ENCODE measurements at regions of chr9 and their contacts with region 1.

Region 1: DNA sequence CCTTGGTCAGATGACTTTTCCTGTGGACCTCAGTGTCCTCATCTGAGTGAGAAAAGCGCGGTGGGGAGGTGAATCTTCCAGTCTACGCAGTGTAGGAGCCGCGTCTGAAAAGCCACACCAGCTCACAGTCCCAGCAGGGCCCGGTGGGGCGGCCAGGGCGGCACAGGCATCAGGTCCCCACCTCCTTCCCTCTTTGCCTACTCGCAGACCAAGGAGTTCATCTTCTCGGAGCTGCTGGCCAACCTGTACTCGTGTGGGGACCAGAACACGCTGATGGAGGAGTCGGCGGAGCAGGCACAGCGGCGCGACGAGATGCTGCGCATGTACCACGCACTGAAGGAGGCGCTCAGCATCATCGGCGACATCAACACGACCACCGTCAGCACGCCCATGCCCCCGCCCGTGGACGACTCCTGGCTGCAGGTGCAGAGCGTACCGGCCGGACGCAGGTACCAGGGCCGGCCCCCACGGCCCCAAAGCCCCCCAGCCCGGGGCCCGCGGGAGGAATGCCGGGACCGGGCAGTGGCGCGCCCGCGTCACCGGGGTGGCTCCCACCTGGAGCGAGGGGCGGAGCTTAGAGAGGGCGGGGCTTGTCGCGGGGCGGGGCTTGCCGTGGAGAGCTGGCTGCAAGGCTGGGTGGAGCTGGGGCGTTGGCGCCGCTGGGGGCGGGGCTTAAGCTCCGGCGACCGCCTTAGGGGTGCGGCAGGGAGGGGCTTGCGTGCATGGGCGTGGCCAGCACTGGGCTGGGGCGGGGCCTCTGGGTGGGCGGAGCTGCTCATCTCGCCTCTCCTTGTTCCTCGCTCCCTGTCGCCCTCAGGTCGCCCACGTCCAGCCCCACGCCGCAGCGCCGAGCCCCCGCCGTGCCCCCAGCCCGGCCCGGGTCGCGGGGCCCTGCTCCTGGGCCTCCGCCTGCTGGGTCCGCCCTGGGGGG is 25.6 kb downstream of the GOLGA2 start:
- DNase-seq: peak; percentile 98
- ATAC-seq: peak; percentile 91
- H3K4me3 Mint-ChIP-seq: peak overlapping the region; percentile 85
- H3K27ac Mint-ChIP-seq: peak overlapping the region; percentile 83
- H3K4me1 Mint-ChIP-seq: peaks cover 41% of the 10 kb centered on the region
- H3K27me3 Mint-ChIP-seq: peaks cover 9% of the 10 kb centered on the region
- CTCF ChIP-seq: no peak

Region 2: DNA sequence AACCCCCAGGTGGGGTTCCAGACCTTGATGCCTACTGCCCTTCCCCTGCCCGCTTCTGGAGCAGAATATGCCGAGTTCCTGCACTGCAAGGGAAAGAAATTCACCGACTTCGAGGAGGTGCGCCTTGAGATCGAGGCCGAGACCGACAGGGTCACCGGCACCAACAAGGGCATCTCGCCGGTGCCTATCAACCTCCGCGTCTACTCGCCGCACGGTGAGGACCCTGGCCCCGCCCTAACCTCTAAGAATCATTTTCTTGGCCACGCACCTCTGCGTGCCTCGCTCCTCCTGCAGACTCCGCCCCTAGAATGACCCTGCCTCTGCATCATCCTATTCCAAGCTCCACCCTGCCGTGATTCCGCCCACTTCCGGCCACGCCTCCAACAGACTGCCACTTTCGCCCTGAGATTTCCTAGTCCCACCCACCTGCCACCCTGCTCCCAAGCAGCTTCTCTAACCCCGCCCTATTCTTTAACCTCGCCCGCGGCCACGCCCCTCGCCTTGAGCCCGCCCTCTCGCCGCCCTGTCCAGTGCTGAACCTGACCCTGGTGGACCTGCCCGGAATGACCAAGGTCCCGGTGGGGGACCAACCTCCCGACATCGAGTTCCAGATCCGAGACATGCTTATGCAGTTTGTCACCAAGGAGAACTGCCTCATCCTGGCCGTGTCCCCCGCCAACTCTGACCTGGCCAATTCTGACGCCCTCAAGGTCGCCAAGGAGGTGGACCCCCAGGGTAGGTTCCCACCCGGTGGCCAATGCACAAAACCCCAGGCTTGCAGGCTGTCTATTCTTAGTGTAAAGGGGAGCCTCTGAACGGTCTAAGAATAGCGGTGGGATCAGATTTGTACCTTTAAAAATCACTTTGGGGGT is 31.4 kb before region 1 on chr9:
- CTCF ChIA-PET with region 1: interaction called, 17 read pairs
- POLR2A ChIA-PET with region 1: interaction called, 4 read pairs
- DNase-seq: peak; percentile 99
- ATAC-seq: peak; percentile 97
- H3K4me3 Mint-ChIP-seq: peak overlapping the region; percentile 75
- H3K27ac Mint-ChIP-seq: peak overlapping the region; percentile 97
- H3K4me1 Mint-ChIP-seq: peaks cover 12% of the 10 kb centered on the region
- H3K27me3 Mint-ChIP-seq: peaks cover 4% of the 10 kb centered on the region; the same call in 1 of the 2 replicates
- CTCF ChIP-seq: no peak

Region 3: DNA sequence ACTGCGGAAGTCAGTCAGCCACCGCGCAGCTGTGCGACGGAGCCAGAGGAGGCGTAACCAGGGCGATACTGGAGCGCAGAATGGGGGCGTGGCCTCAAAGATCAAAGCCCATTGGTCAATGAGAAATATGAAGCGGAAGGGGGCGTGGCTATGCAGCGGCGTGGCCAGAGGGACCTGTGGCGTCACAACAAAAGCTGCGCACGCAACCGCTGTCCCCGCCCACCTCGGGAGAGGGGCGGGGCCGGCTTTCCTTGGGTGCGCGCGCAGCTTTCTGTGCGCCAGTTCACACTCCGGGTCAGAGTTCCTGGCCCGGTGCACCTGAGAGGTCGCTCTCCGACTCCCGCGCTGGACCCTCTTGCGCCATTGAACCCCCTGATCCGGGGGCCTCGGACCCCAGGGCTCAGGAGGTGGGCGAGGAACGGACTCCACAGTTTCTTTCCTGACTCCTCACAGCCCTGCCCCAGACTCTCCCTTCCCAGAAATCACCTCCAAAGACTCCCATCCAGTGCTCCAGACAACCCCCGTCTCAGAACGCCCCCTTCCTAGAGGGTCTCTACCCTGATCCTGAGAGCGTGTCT is 25.9 kb after region 1 on chr9 and contains the starts of genes GOLGA2 and SWI5:
- CTCF ChIA-PET with region 1: interaction called, 25 read pairs
- POLR2A ChIA-PET with region 1: interaction called, 9 read pairs
- DNase-seq: peak; percentile 100
- ATAC-seq: peak; percentile 91
- H3K4me3 Mint-ChIP-seq: peak within 1 kb of the TSS; percentile 92
- H3K27ac Mint-ChIP-seq: peak within 1 kb of the TSS; percentile 97
- H3K4me1 Mint-ChIP-seq: peaks cover 14% of the 10 kb centered on the region
- H3K27me3 Mint-ChIP-seq: no peaks in the 10 kb centered on the region; the same call in 1 of the 2 replicates
- CTCF ChIP-seq: no peak
- total RNA-seq, gene GOLGA2: 54.7 to 66.3 TPM (median 58.8 TPM) in 3 replicates
- total RNA-seq, gene SWI5: 26.2 to 32.0 TPM (median 31.7 TPM) in 3 replicates

Region 4: GRCh38 chr9:128296337-128297220 is 46.4 kb after region 1 on chr9:
- CTCF ChIA-PET with region 1: interaction called, 10 read pairs
- POLR2A ChIA-PET with region 1: no interaction called
- DNase-seq: no peak
- ATAC-seq: no peak
- H3K4me3 Mint-ChIP-seq: no peak overlapping the region
- H3K27ac Mint-ChIP-seq: peak overlapping the region; percentile 23; the same call in 1 of the 2 replicates
- H3K4me1 Mint-ChIP-seq: no peaks in the 10 kb centered on the region
- H3K27me3 Mint-ChIP-seq: peaks cover 2% of the 10 kb centered on the region; the same call in 1 of the 2 replicates
- CTCF ChIP-seq: no peak

Region 5: DNA sequence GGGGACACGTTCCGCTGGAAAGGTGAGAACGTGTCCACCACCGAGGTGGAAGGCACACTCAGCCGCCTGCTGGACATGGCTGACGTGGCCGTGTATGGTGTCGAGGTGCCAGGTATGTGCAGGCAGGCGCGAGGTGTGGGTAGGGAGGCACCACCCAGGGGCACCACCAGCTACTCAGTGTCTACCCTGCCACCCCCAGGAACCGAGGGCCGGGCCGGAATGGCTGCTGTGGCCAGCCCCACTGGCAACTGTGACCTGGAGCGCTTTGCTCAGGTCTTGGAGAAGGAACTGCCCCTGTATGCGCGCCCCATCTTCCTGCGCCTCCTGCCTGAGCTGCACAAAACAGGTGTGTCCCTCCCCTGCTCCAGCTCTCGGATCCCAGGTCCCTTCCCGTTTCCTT is 105.3 kb after region 1 on chr9:
- CTCF ChIA-PET with region 1: no interaction called
- POLR2A ChIA-PET with region 1: no interaction called
- DNase-seq: no peak
- ATAC-seq: no peak
- H3K4me3 Mint-ChIP-seq: no peak overlapping the region
- H3K27ac Mint-ChIP-seq: no peak overlapping the region
- H3K4me1 Mint-ChIP-seq: no peaks in the 10 kb centered on the region
- H3K27me3 Mint-ChIP-seq: no peaks in the 10 kb centered on the region
- CTCF ChIP-seq: no peak

Region 6: GRCh38 chr9:128459011-128459410 is 208.8 kb after region 1 on chr9:
- CTCF ChIA-PET with region 1: no interaction called
- POLR2A ChIA-PET with region 1: no interaction called
- DNase-seq: no peak
- ATAC-seq: no peak
- H3K4me3 Mint-ChIP-seq: no peak overlapping the region
- H3K27ac Mint-ChIP-seq: no peak overlapping the region
- H3K4me1 Mint-ChIP-seq: peaks cover 14% of the 10 kb centered on the region
- H3K27me3 Mint-ChIP-seq: peaks cover 64% of the 10 kb centered on the region
- CTCF ChIP-seq: no peak